ENCODE measurements at regions of chr4 and their contacts with region 1.

Region 1: DNA sequence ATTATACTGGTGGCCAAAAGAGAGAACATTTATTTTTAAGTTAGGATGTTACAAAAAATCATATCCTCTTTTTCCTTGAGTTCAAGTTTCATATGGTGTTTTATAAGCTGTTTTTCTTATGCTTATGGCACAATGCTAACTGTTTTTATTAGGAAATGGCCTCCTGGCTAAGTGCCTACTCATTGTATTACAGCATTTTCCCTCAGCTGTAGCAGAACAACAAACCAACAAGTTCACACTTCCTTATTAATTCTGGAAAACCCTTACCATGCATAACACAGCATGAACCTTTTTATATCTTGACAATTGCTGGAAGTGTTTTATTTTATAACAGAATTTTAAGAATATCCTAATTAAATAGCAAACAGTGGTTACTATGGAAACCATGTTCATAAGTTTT is 165.8 kb downstream of the GASK1B start:
- DNase-seq: no peak
- H3K4me3 ChIP-seq: no peak overlapping the region
- H3K27ac ChIP-seq: no peak overlapping the region
- H3K27me3 ChIP-seq: no peaks in the 10 kb centered on the region
- CTCF ChIP-seq: no peak

Region 2: GRCh38 chr4:157804986-157805385 is 202.0 kb before region 1 on chr4:
- in situ Hi-C with region 1: no loop called
- DNase-seq: no peak
- H3K4me3 ChIP-seq: no peak overlapping the region
- H3K27ac ChIP-seq: no peak overlapping the region
- H3K27me3 ChIP-seq: no peaks in the 10 kb centered on the region
- CTCF ChIP-seq: peak; percentile 71

Region 3: GRCh38 chr4:158172261-158173258 is 165.6 kb after region 1 on chr4 and contains the start of gene GASK1B:
- in situ Hi-C with region 1: loop called (anchors 10 kb)
- DNase-seq: peak; percentile 69
- H3K4me3 ChIP-seq: peak within 1 kb of the TSS; percentile 47
- H3K27ac ChIP-seq: peak within 1 kb of the TSS; percentile 40
- H3K27me3 ChIP-seq: no peaks in the 10 kb centered on the region
- CTCF ChIP-seq: peak; percentile 76

Measured in brain microvascular endothelial cell (primary cell).